T-cell (primary cell): ENCODE measurements at regions of chr6 and their contacts with region 1.

Region 1: DNA sequence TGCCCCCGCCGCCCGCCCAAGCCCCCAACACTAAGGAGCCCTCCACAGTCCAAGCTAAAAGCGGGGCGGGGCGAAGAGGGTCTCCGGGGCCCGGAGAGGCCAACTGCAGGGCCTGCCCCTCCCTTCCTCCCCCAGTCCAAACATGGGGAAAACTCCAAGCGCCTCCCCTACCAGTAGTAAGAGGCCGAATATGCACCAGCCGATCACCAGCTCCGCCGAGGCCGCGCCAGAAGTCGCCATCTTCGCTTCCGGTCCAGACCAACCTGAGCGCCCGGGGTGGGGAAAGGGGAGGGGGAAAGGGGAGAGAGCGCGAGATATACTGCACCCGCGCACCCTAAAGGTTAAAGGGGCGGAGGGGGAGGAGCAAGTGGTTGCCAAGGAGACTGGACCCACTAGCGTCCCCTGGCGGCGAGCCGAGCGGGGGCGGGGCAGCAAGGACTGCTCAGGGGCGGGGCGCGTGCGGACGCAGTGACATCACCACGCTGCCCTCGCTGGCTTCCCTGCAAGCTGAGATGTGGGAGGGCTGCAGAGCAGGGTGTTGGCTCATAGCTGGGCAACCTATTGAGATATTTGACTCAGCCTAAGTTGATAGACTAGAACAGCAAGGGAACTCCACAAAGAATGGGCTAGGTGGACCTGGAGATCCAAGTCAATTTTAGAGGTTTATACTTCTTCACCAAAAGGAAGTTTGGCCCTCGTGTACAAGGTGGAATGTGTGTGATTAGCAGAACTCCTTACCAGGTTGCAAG is at the start of gene LMBRD1:
- DNase-seq: peak; percentile 95 to 100 (median 98)
- ATAC-seq: peak; percentile 84 to 93 (median 92)
- H3K4me3 ChIP-seq: peak within 1 kb of the TSS; percentile 68 to 91
- H3K4me3 Mint-ChIP-seq: peak within 1 kb of the TSS; percentile 89 to 94 (median 93)
- H3K27ac ChIP-seq: peak within 1 kb of the TSS; percentile 96
- H3K27ac Mint-ChIP-seq: peak within 1 kb of the TSS; percentile 91 to 93
- H3K4me1 ChIP-seq: peaks cover 10 to 17% of the 10 kb centered on the region in 2 experiments
- H3K4me1 Mint-ChIP-seq: peaks cover 48 to 51% (median 50%) of the 10 kb centered on the region in 3 donors
- H3K27me3 ChIP-seq: no peaks in the 10 kb centered on the region
- H3K27me3 Mint-ChIP-seq: no peaks in the 10 kb centered on the region
- total RNA-seq, gene LMBRD1: 37.1 to 41.5 (median 37.7) TPM

Region 2: GRCh38 chr6:69813508-69813907 is 16.7 kb after region 1 on chr6:
- CTCF ChIA-PET with region 1: interaction called, 4 to 34 read pairs
- POLR2A ChIA-PET with region 1: interaction called in 1 of 2 experiments, 3 read pairs
- DNase-seq: no peak
- ATAC-seq: peak; percentile 40 to 65 (median 60)
- H3K4me3 ChIP-seq: no peak overlapping the region
- H3K4me3 Mint-ChIP-seq: peak overlapping the region; percentile 5 to 63 (median 47)
- H3K27ac ChIP-seq: peak overlapping the region; percentile 76
- H3K27ac Mint-ChIP-seq: peak overlapping the region; percentile 91 to 93
- H3K4me1 ChIP-seq: peaks cover 24 to 42% of the 10 kb centered on the region in 2 experiments
- H3K4me1 Mint-ChIP-seq: peaks cover 55 to 66% (median 60%) of the 10 kb centered on the region in 3 donors
- H3K27me3 ChIP-seq: no peaks in the 10 kb centered on the region
- H3K27me3 Mint-ChIP-seq: no peaks in the 10 kb centered on the region

Region 3: DNA sequence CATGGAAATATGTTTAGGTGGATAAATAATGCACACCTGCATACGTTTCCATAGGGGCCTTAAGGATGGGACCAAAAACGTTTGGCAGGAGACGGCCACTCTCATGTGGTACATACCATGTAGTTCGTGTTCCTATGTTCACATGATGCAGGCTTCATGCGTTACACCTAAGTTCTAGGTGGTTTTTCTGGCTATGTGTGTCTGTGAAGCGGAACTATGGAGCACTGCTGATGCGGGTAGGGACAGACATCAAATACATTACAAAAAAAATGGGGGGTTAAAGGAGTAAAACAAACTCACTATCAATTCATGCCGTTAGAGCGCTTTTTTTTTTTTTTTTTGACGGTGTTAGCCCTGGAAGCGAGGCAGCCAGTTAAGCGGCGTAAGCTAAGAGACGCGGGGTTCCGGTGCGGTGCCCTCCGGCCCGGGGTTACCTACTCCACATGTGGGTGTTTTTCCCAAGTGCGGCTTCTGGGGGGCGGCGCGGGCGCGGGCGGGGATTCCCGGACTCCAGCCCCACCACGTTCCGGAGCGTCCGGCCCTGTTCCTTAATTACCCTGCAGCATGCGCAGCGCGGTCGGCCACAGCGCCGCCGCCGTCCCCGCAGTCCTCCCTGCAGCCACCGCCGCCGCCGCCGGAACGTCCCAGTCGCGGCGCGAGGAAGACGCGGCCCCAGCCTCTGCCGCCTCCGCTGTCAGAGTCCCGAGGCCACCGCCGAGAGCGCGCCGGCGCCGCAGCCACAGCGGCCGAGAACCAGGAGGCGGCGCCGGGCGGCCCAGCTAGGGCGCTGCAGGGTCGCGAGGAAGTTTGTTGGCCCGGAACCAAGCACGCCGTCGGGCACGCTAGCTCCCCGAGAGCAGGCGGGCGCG is 70.2 kb after region 1 on chr6:
- CTCF ChIA-PET with region 1: interaction called, 5 to 10 read pairs
- POLR2A ChIA-PET with region 1: no interaction called
- DNase-seq: peak; percentile 8 to 73 (median 51)
- ATAC-seq: peak; percentile 83 to 90 (median 88)
- H3K4me3 ChIP-seq: peak overlapping the region; percentile 56 to 67
- H3K4me3 Mint-ChIP-seq: peak overlapping the region; percentile 83 to 87 (median 85)
- H3K27ac ChIP-seq: no peak overlapping the region
- H3K27ac Mint-ChIP-seq: peak overlapping the region in 1 of 2 donors; percentile 49
- H3K4me1 ChIP-seq: peaks cover 4 to 14% of the 10 kb centered on the region in 2 experiments
- H3K4me1 Mint-ChIP-seq: peaks cover 19 to 26% (median 21%) of the 10 kb centered on the region in 3 donors
- H3K27me3 ChIP-seq: peaks cover 9 to 10% of the 10 kb centered on the region in 2 experiments
- H3K27me3 Mint-ChIP-seq: peaks cover 22 to 34% of the 10 kb centered on the region in 2 donors

Region 4: GRCh38 chr6:70667711-70668498 is 871.1 kb after region 1 on chr6 and contains the start of gene SMAP1:
- CTCF ChIA-PET with region 1: interaction called in 1 of 2 experiments, 3 read pairs
- POLR2A ChIA-PET with region 1: interaction called in 1 of 2 experiments, 13 read pairs
- DNase-seq: peak; percentile 75 to 96 (median 86)
- ATAC-seq: peak; percentile 92 to 95 (median 94)
- H3K4me3 ChIP-seq: peak within 1 kb of the TSS; percentile 75 to 89
- H3K4me3 Mint-ChIP-seq: peak within 1 kb of the TSS; percentile 85 to 93 (median 86)
- H3K27ac ChIP-seq: peak within 1 kb of the TSS; percentile 79
- H3K27ac Mint-ChIP-seq: peak within 1 kb of the TSS; percentile 95 to 97
- H3K4me1 ChIP-seq: peaks cover 16 to 22% of the 10 kb centered on the region in 2 experiments
- H3K4me1 Mint-ChIP-seq: peaks cover 54 to 60% (median 56%) of the 10 kb centered on the region in 3 donors
- H3K27me3 ChIP-seq: peaks cover 0 to 3% of the 10 kb centered on the region in 2 experiments
- H3K27me3 Mint-ChIP-seq: no peaks in the 10 kb centered on the region
- total RNA-seq, gene SMAP1: 27.1 to 32.3 (median 31.9) TPM